ENCODE measurements at regions of chr12 and their contacts with region 1.

Region 1: GRCh38 chr12:6062757-6063735 is 61.4 kb downstream of the VWF start:
- DNase-seq: peak; percentile 50 to 79 (median 63)
- H3K4me3 ChIP-seq: no peak overlapping the region
- H3K27ac ChIP-seq: no peak overlapping the region
- H3K4me1 ChIP-seq: no peaks in the 10 kb centered on the region
- H3K27me3 ChIP-seq: no peaks in the 10 kb centered on the region
- CTCF ChIP-seq: peak; percentile 79 to 96 (median 90)
- POLR2A ChIP-seq: no peak

Region 2: GRCh38 chr12:6278439-6279255 is 215.6 kb after region 1 on chr12:
- intact Hi-C with region 1: loop called (anchors 5 kb)
- DNase-seq: peak; percentile 86 to 92 (median 89)
- H3K4me3 ChIP-seq: peak overlapping the region in 2 of 4 donors; percentile 23 to 69
- H3K27ac ChIP-seq: peak overlapping the region; percentile 1 to 92 (median 85)
- H3K4me1 ChIP-seq: peaks cover 17 to 29% of the 10 kb centered on the region in 2 donors
- H3K27me3 ChIP-seq: no peaks in the 10 kb centered on the region
- CTCF ChIP-seq: peak in 5 of 6 experiments; percentile 35 to 100 (median 95)
- POLR2A ChIP-seq: peak in 1 of 2 donors; percentile 60

Measured in adrenal gland (tissue), 19 donors.